HepG2 (cell line): ENCODE measurements at regions of chr3 and their contacts with region 1.

Region 1: DNA sequence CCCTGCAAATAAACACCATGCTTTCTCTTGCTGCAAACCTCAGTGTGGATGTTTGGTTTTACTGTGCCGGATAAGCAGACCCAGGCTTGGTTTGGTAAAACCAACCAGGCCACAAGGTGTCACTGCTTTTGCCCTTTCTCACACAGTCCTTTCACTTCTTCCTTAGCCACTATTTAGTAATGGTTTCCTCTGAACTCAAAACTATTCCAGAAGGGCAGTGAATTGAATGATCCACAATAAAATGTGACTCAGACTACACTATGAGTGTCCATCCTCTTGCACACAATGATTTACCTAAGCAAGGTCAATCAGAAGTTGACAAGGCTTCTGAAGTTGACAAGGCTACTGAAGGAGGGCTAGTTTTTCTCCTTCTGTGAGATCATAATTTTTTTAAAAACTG is 552.4 kb upstream of the CCDC54 start:
- DNase-seq: peak; percentile 3
- ATAC-seq: peak; percentile 72
- H3K4me3 ChIP-seq: no peak overlapping the region
- H3K27ac ChIP-seq: no peak overlapping the region
- H3K4me1 ChIP-seq: no peaks in the 10 kb centered on the region
- H3K27me3 ChIP-seq: peaks cover 0 to 1% of the 10 kb centered on the region in 2 experiments; a peak in 1 of 5 replicates
- CTCF ChIP-seq: peak; percentile 29; the same call in 1 of the 2 replicates
- EP300 ChIP-seq: no peak
- POLR2A ChIP-seq: no peak
- RAD21 ChIP-seq: no peak

Region 2: DNA sequence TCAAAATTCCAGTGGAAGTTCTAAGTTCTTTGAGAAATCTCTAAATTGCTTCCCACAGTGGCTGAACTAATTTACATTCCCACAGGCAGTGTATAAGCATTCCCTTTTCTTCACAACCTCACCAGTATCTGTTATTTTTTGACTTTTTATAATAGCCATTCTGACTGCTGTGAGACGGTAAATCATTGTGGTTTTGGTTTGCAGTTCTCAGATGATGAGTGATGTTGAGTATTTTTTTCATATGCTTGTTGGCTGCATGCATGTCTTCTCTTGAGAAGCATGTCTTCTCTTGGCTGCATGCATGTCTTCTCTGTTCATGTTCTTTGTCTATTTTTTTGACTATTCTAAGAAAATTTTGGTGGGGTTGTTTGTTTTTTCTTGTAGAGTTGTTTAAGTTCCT is 52.8 kb after region 1 on chr3:
- CTCF ChIA-PET with region 1: no interaction called
- POLR2A ChIA-PET with region 1: no interaction called
- in situ Hi-C with region 1: no loop called
- intact Hi-C with region 1: no loop called
- DNase-seq: no peak
- ATAC-seq: no peak
- H3K4me3 ChIP-seq: no peak overlapping the region
- H3K27ac ChIP-seq: no peak overlapping the region
- H3K4me1 ChIP-seq: no peaks in the 10 kb centered on the region
- H3K27me3 ChIP-seq: 0 out of 5 replicates have a peak, but pooled peaks cover 0 to 3% of the 10 kb centered on the region in 2 experiments
- CTCF ChIP-seq: no peak
- EP300 ChIP-seq: no peak
- POLR2A ChIP-seq: no peak
- RAD21 ChIP-seq: no peak

Region 3: DNA sequence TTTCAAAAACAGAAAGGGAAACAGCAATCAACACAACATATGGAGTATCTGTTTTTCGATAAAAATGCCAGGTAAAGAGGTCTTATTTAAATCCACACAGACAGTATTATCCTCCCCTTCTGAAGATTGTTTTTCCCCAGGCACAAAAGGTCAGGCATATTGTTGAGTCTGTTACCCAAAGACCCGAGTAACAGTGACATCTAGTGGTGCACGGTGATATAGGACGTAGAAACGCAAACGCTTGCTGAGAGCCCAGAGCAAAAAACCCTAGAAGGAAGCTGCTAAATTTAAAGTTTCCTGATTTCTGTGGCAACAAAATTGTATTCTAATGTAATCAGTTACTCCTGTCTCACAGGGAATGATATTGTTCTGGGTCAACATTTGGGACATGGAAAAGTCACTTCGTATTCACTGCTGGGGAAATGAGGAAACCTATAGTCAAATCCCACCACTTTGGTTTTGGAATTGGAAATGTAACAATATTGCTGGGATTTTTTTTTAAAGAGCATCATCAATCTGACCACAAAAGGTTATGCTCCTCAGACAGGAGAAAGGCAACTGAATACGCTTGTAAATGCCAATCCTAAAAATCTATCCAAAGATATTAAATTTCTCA is 239.7 kb after region 1 on chr3:
- CTCF ChIA-PET with region 1: interaction called, 5 read pairs
- POLR2A ChIA-PET with region 1: no interaction called
- in situ Hi-C with region 1: no loop called
- intact Hi-C with region 1: loop called (anchors 1 kb)
- DNase-seq: peak; percentile 44
- ATAC-seq: peak; percentile 90
- H3K4me3 ChIP-seq: no peak overlapping the region
- H3K27ac ChIP-seq: no peak overlapping the region
- H3K4me1 ChIP-seq: no peaks in the 10 kb centered on the region
- H3K27me3 ChIP-seq: no peaks in the 10 kb centered on the region
- CTCF ChIP-seq: peak; percentile 81
- EP300 ChIP-seq: no peak
- POLR2A ChIP-seq: no peak
- RAD21 ChIP-seq: peak; percentile 41; the same call in 1 of the 2 replicates

Region 4: GRCh38 chr3:107117922-107118536 is 293.2 kb after region 1 on chr3:
- CTCF ChIA-PET with region 1: no interaction called
- POLR2A ChIA-PET with region 1: no interaction called
- in situ Hi-C with region 1: no loop called
- intact Hi-C with region 1: loop called (anchors 1 kb)
- DNase-seq: peak; percentile 16
- ATAC-seq: peak; percentile 70
- H3K4me3 ChIP-seq: no peak overlapping the region
- H3K27ac ChIP-seq: no peak overlapping the region
- H3K4me1 ChIP-seq: no peaks in the 10 kb centered on the region
- H3K27me3 ChIP-seq: no peaks in the 10 kb centered on the region
- CTCF ChIP-seq: peak; percentile 51
- EP300 ChIP-seq: no peak
- POLR2A ChIP-seq: no peak
- RAD21 ChIP-seq: no peak